Astrocyte of the cerebellum (primary cell): ENCODE measurements at regions of chr13 and their contacts with region 1.

Region 1: GRCh38 chr13:85197431-85197830 is 601.8 kb downstream of the SLITRK6 start:
- DNase-seq: no peak
- H3K4me3 ChIP-seq: no peak overlapping the region
- CTCF ChIP-seq: no peak

Region 2: GRCh38 chr13:85163063-85163462 is 34.4 kb before region 1 on chr13:
- in situ Hi-C with region 1: loop called (anchors 5 kb)
- DNase-seq: no peak
- H3K4me3 ChIP-seq: no peak overlapping the region
- CTCF ChIP-seq: no peak